ENCODE measurements at regions of chr3 and their contacts with region 1.

Region 1: GRCh38 chr3:46960081-46960701 is 16.4 kb downstream of the CCDC12 start:
- DNase-seq: no peak
- H3K4me3 ChIP-seq: no peak overlapping the region
- H3K27ac ChIP-seq: peak overlapping the region; percentile 23
- H3K4me1 ChIP-seq: peaks cover 76% of the 10 kb centered on the region
- CTCF ChIP-seq: no peak

Region 2: DNA sequence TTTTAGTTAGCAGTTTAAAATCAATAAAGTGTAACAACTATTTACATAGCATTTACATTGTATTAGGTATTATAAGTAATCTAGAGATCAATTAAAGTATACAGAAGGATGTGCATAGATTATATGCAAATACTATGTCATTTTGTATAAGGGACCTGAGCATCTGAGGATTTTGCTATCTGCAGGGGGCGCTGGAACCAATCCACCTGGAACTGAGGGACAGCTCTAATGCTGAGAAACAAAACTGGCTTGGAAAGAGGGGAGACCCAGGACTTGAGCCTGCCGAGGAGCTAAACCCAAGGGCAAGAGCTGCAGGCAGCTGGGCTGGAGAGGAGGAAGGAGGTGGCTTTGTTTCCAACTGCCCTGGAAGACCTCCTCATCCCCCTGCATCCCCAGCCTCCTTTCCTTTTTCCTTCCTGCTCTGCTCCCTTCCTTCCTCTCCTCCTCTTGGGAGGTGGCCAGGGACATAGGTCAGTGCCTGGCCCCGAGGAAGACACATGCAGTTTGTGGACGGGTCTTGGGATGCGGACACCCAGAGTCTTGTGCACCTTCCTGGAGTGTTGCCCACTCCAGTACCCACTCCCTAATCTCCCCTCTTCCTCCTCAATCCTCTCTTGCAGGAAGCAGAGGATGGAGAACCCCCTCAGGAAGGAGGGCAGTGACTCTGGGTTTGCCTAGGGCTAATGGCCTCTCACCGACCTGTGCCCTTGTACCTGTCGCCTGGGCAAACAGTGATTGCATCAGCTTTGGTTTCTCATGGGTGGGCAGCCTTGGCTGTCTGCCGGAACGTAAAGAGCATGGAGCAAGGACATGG is 463.2 kb before region 1 on chr3:
- CTCF ChIA-PET with region 1: no interaction called
- POLR2A ChIA-PET with region 1: no interaction called
- intact Hi-C with region 1: no loop called
- DNase-seq: peak; percentile 72
- H3K4me3 ChIP-seq: no peak overlapping the region
- H3K27ac ChIP-seq: no peak overlapping the region
- H3K4me1 ChIP-seq: peaks cover 77% of the 10 kb centered on the region
- CTCF ChIP-seq: peak; percentile 85

Region 3: GRCh38 chr3:46778101-46778500 is 182.1 kb before region 1 on chr3:
- CTCF ChIA-PET with region 1: no interaction called
- POLR2A ChIA-PET with region 1: no interaction called
- intact Hi-C with region 1: no loop called
- DNase-seq: peak; percentile 30
- H3K4me3 ChIP-seq: no peak overlapping the region
- H3K27ac ChIP-seq: no peak overlapping the region
- H3K4me1 ChIP-seq: peaks cover 4% of the 10 kb centered on the region
- CTCF ChIP-seq: no peak

Region 4: DNA sequence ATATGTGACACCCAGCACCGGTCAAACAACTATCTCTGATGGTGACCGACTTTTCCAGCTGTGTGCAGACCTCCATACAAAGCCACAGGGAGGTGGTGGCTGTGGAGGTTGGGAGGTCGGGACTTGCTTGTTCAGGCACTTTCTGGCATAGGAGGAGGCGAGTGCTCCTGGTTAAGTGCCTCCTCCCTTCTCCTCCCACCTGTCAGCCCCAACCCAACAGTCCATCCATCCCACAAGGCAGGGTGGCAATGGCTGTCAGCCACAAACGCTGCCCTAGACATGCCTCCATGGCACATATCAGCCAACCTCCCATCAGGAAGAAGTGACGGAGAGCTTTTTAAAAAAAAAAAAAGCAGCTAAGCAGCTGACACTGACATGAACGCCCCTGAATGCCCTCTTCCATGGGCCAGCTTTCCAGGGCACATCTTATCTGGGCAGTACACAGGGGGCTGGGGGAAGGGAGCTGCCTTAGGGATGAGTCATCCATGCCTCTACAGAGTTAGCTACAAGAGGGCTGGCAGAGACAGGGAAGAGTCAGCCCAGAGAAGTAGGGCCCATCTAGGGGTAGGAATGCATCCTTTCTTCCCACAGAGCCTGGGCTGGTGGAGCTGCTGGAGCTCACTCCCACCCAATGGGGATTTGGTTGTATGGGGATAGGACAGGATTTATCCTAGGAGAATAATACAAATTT is 24.9 kb before region 1 on chr3:
- CTCF ChIA-PET with region 1: interaction called, 3 read pairs
- POLR2A ChIA-PET with region 1: interaction called, 13 read pairs
- intact Hi-C with region 1: no loop called
- DNase-seq: no peak
- H3K4me3 ChIP-seq: no peak overlapping the region
- H3K27ac ChIP-seq: no peak overlapping the region
- H3K4me1 ChIP-seq: peaks cover 79% of the 10 kb centered on the region
- CTCF ChIP-seq: no peak

Region 5: DNA sequence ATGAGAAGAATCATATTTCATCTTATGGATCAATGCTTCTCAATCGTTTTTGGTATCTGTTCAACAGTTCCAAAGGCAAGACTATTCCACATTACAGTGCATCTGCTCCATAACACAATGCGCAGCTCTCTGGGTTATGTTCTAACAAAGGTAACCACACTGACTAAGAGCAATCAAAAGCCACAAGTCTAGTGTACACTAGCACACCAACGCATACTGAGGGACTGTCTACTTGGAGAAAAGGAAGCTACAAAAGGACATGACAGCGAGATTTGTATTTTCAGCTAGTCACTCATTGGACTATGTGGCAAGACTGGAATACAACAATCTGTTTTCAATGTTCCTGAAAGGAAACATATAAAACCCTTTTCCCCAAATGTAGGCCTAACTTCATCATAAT is 167.9 kb after region 1 on chr3:
- CTCF ChIA-PET with region 1: no interaction called
- POLR2A ChIA-PET with region 1: no interaction called
- intact Hi-C with region 1: no loop called
- DNase-seq: no peak
- H3K4me3 ChIP-seq: no peak overlapping the region
- H3K27ac ChIP-seq: no peak overlapping the region
- H3K4me1 ChIP-seq: no peaks in the 10 kb centered on the region
- CTCF ChIP-seq: no peak